A549 (cell line): ENCODE measurements at regions of chr19 and their contacts with region 1.

Region 1: GRCh38 chr19:47305309-47305751 is 4.3 kb upstream of the C5AR1 start:
- DNase-seq: peak; percentile 86 to 92
- ATAC-seq: peak; percentile 74 to 75
- H3K4me3 ChIP-seq: no peak overlapping the region
- H3K27ac ChIP-seq: peak overlapping the region; percentile 60 to 71
- H3K4me1 ChIP-seq: peaks cover 29% of the 10 kb centered on the region
- CTCF ChIP-seq: peak; percentile 99
- EP300 ChIP-seq: no peak
- POLR2A ChIP-seq: no peak
- RAD21 ChIP-seq: peak; percentile 58 to 62

Region 2: GRCh38 chr19:47112997-47113849 is 192.1 kb before region 1 on chr19 and contains the start of gene ZC3H4:
- CTCF ChIA-PET with region 1: no interaction called
- POLR2A ChIA-PET with region 1: no interaction called
- DNase-seq: peak; percentile 99 to 100
- ATAC-seq: peak; percentile 81 to 92
- H3K4me3 ChIP-seq: peak within 1 kb of the TSS; percentile 98
- H3K27ac ChIP-seq: peak within 1 kb of the TSS; percentile 99
- H3K4me1 ChIP-seq: peaks cover 27% of the 10 kb centered on the region
- CTCF ChIP-seq: no peak
- EP300 ChIP-seq: no peak
- POLR2A ChIP-seq: peak; percentile 75
- RAD21 ChIP-seq: no peak
- polyA plus RNA-seq, gene ZC3H4: 7.7 and 9.6 TPM in 2 replicates

Region 3: GRCh38 chr19:47253467-47253881 is 51.9 kb before region 1 on chr19:
- CTCF ChIA-PET with region 1: no interaction called
- POLR2A ChIA-PET with region 1: no interaction called
- DNase-seq: peak in 1 of 2 experiments; percentile 68
- ATAC-seq: no peak
- H3K4me3 ChIP-seq: no peak overlapping the region
- H3K27ac ChIP-seq: peak overlapping the region; percentile 37 to 74; a peak in 5 of 6 replicates
- H3K4me1 ChIP-seq: peaks cover 35% of the 10 kb centered on the region
- CTCF ChIP-seq: no peak
- EP300 ChIP-seq: no peak
- POLR2A ChIP-seq: no peak
- RAD21 ChIP-seq: no peak

Region 4: GRCh38 chr19:47336853-47337279 is 31.5 kb after region 1 on chr19:
- CTCF ChIA-PET with region 1: interaction called, 11 read pairs
- POLR2A ChIA-PET with region 1: no interaction called
- DNase-seq: peak in 1 of 2 experiments; percentile 32
- ATAC-seq: peak; percentile 13 to 36; a peak in 3 of 6 replicates
- H3K4me3 ChIP-seq: no peak overlapping the region
- H3K27ac ChIP-seq: peak overlapping the region in 1 of 2 experiments; percentile 54; a peak in 3 of 6 replicates
- H3K4me1 ChIP-seq: peaks cover 24% of the 10 kb centered on the region
- CTCF ChIP-seq: no peak
- EP300 ChIP-seq: no peak
- POLR2A ChIP-seq: no peak
- RAD21 ChIP-seq: no peak

Region 5: DNA sequence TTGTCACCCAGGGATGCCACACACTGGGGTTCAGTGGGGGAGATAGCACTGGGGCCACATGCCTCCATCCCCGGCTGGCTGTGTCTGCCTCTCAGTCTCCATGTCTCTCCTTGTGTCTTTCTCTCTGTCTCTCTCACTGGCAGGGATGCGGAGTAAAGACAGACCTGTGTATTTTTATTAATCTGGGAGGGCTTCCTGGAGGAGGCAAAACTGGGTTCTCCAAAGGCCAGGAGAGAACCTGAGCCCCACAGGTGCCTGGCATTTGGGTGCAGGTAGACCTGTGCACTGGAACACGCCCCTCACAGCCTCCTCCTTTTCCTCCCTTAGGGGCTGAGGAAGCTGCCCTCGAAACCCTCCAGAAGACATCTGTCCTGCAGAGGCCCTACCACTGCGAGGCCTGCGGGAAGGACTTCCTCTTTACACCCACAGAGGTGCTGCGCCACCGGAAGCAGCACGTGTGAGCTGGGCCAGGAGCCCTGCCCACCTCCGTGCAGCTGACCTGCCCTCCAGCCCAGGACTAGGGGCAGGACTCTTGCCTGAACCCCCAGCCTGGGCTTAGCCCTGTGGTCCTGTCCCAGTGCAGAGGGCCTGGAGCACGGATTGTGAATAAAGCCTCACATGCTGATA is 76.4 kb after region 1 on chr19:
- CTCF ChIA-PET with region 1: interaction called, 10 read pairs
- POLR2A ChIA-PET with region 1: no interaction called
- DNase-seq: no peak
- ATAC-seq: no peak
- H3K4me3 ChIP-seq: no peak overlapping the region
- H3K27ac ChIP-seq: no peak overlapping the region
- H3K4me1 ChIP-seq: 0 out of 3 replicates have a peak, but pooled peaks cover 6% of the 10 kb centered on the region
- CTCF ChIP-seq: no peak
- EP300 ChIP-seq: no peak
- POLR2A ChIP-seq: no peak
- RAD21 ChIP-seq: no peak

Region 6: GRCh38 chr19:47428177-47428894 is 123.0 kb after region 1 on chr19:
- CTCF ChIA-PET with region 1: interaction called, 10 read pairs
- POLR2A ChIA-PET with region 1: no interaction called
- DNase-seq: peak; percentile 95 to 98
- ATAC-seq: peak; percentile 75 to 85
- H3K4me3 ChIP-seq: peak overlapping the region; percentile 42
- H3K27ac ChIP-seq: peak overlapping the region in 1 of 2 experiments; percentile 43; a peak in 2 of 6 replicates
- H3K4me1 ChIP-seq: peaks cover 20% of the 10 kb centered on the region
- CTCF ChIP-seq: no peak
- EP300 ChIP-seq: no peak
- POLR2A ChIP-seq: no peak
- RAD21 ChIP-seq: no peak